K562 (cell line): ENCODE measurements at regions of chr1 and their contacts with region 1.

Region 1: GRCh38 chr1:95233737-95234500 is at the start of gene RWDD3:
- DNase-seq: peak; percentile 93 to 94 (median 94)
- ATAC-seq: peak; percentile 97
- H3K4me3 ChIP-seq: peak within 1 kb of the TSS; percentile 79
- H3K27ac ChIP-seq: peak within 1 kb of the TSS; percentile 70
- H3K4me1 ChIP-seq: peaks cover 11 to 13% of the 10 kb centered on the region in 2 experiments; a peak in 4 of 5 replicates
- H3K27me3 ChIP-seq: no peaks in the 10 kb centered on the region
- CTCF ChIP-seq: peak; percentile 73 to 93 (median 85)
- EP300 ChIP-seq: peak; percentile 29; the same call in 1 of the 2 replicates
- POLR2A ChIP-seq: peak; percentile 82
- RAD21 ChIP-seq: peak; percentile 94 to 98
- polyA plus RNA-seq, gene RWDD3: 52.7 to 65.0 TPM

Region 2: DNA sequence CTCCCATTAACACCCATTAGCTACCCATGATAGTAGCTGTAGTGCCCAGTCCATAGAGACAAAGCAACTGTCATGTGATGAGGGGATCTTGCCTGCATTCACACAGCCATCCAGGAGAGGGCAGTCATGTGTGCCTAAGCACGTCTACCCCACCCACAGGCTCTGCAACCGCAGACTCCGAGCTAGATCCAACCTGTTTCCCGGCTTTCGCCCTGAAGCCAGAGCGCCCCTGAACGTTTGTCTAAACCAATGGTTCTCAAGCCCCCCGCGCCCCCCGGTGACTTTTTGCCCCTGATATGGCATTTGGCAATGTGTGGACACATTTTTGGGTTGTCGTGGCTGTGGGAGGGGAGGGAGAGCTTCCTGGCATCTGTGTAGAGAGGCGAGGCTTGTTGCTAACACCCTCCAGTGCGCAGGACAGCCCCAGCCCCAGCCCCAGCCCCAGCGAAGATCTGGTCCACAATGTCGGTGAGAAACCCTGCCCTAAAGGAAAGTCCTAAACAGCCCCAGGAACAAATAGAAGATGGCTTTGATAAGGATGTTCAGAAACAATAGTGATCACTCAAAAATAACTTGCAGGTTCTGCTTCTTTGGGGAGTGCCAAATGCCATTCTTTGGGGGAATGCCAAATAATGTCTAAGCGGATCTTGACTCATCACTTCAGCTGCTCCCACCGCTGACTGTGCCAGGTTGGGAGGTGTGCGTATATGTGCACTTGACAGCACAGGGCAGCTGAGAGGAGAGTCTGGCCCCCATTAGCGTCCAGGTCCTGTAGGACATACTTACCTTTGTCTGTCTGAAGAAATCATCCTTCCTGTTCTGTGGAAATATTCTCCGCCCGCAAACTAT is 379.2 kb before region 1 on chr1:
- CTCF ChIA-PET with region 1: interaction called, 4 read pairs
- POLR2A ChIA-PET with region 1: interaction called, 4 read pairs
- in situ Hi-C with region 1: no loop called
- intact Hi-C with region 1: loop called (anchors 1 kb)
- DNase-seq: peak; percentile 85 to 87 (median 86)
- ATAC-seq: peak; percentile 99
- H3K4me3 ChIP-seq: peak overlapping the region; percentile 28
- H3K27ac ChIP-seq: no peak overlapping the region
- H3K4me1 ChIP-seq: no peaks in the 10 kb centered on the region; a peak in 1 of 5 replicates
- H3K27me3 ChIP-seq: peaks cover 3 to 5% of the 10 kb centered on the region in 2 experiments; a peak in 4 of 5 replicates
- CTCF ChIP-seq: peak; percentile 91 to 92 (median 91)
- EP300 ChIP-seq: no peak
- POLR2A ChIP-seq: no peak
- RAD21 ChIP-seq: peak; percentile 87 to 94

Region 3: GRCh38 chr1:95013950-95014574 is 219.9 kb before region 1 on chr1:
- CTCF ChIA-PET with region 1: no interaction called
- POLR2A ChIA-PET with region 1: no interaction called
- in situ Hi-C with region 1: no loop called
- intact Hi-C with region 1: no loop called
- DNase-seq: no peak
- ATAC-seq: no peak
- H3K4me3 ChIP-seq: no peak overlapping the region
- H3K27ac ChIP-seq: no peak overlapping the region
- H3K4me1 ChIP-seq: no peaks in the 10 kb centered on the region
- H3K27me3 ChIP-seq: no peaks in the 10 kb centered on the region
- CTCF ChIP-seq: no peak
- EP300 ChIP-seq: no peak
- POLR2A ChIP-seq: no peak
- RAD21 ChIP-seq: no peak

Region 4: GRCh38 chr1:95043141-95043980 is 190.6 kb before region 1 on chr1:
- CTCF ChIA-PET with region 1: interaction called, 6 read pairs
- POLR2A ChIA-PET with region 1: no interaction called
- in situ Hi-C with region 1: no loop called
- intact Hi-C with region 1: loop called (anchors 5 kb)
- DNase-seq: peak; percentile 77 to 88 (median 81)
- ATAC-seq: peak; percentile 95
- H3K4me3 ChIP-seq: no peak overlapping the region
- H3K27ac ChIP-seq: no peak overlapping the region
- H3K4me1 ChIP-seq: no peaks in the 10 kb centered on the region; a peak in 1 of 5 replicates
- H3K27me3 ChIP-seq: no peaks in the 10 kb centered on the region
- CTCF ChIP-seq: peak; percentile 99 to 100 (median 100)
- EP300 ChIP-seq: no peak
- POLR2A ChIP-seq: no peak
- RAD21 ChIP-seq: peak; percentile 82 to 95

Region 5: GRCh38 chr1:95072532-95073419 is 161.1 kb before region 1 on chr1 and contains the start of gene ALG14:
- CTCF ChIA-PET with region 1: interaction called, 3 read pairs
- POLR2A ChIA-PET with region 1: no interaction called
- in situ Hi-C with region 1: no loop called
- intact Hi-C with region 1: loop called (anchors 1 kb)
- DNase-seq: peak; percentile 86 to 97 (median 90)
- ATAC-seq: peak; percentile 99
- H3K4me3 ChIP-seq: peak within 1 kb of the TSS; percentile 54
- H3K27ac ChIP-seq: peak within 1 kb of the TSS; percentile 66
- H3K4me1 ChIP-seq: peaks cover 0 to 5% of the 10 kb centered on the region in 2 experiments; a peak in 2 of 5 replicates
- H3K27me3 ChIP-seq: no peaks in the 10 kb centered on the region
- CTCF ChIP-seq: no peak
- EP300 ChIP-seq: no peak
- POLR2A ChIP-seq: peak; percentile 83
- RAD21 ChIP-seq: peak in 1 of 2 experiments; percentile 17; a peak in 1 of 4 replicates
- polyA plus RNA-seq, gene ALG14: 14.9 to 16.2 TPM

Region 6: DNA sequence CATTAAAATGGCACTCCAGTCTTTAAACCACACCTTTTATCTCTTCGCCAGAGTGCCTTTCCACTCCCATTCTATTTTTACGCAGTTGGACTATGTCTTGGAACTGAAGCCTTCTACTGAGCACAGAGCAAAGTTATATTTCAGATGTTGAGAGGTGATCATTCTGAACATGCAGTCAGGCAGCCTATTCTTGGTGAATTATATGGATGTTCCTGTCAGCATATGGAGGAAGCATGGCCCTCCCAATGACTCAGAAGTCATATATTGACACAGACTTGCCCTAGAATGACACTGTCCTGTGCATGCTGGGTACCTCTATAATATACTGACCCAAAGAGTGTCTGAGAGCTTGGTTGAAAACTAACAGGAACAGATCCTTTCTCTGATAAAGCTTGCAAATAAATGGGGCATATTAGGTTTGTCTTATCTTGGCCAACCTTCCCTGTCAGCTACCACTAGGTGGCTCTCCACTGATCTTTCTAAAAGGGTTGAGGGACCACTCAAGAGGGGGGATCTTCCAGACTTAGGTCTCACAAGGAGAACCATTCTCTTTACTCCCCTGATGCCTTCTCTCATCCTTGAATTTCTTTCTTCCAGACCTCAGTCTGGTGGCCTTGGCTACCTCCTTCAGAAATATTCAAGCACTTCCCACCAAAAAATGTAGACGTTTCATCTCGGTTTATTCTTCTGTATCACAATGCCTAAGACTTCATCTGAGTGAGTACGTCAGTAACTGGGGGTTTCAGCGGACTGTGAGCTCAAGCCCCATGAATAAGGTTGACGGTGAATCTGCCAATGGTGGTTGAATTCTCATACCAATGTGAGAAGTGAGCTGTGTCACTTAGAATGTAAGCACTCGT is 149.4 kb before region 1 on chr1:
- CTCF ChIA-PET with region 1: interaction called, 8 read pairs
- POLR2A ChIA-PET with region 1: no interaction called
- in situ Hi-C with region 1: no loop called
- intact Hi-C with region 1: loop called (anchors 1 kb)
- DNase-seq: peak; percentile 68 to 84 (median 77)
- ATAC-seq: peak; percentile 78
- H3K4me3 ChIP-seq: no peak overlapping the region; the same call in 1 of the 2 replicates
- H3K27ac ChIP-seq: peak overlapping the region; percentile 95
- H3K4me1 ChIP-seq: peaks cover 9 to 43% of the 10 kb centered on the region in 2 experiments; a peak in 4 of 5 replicates
- H3K27me3 ChIP-seq: no peaks in the 10 kb centered on the region
- CTCF ChIP-seq: peak; percentile 64 to 84 (median 76); a peak in 5 of 6 replicates
- EP300 ChIP-seq: peak; percentile 54
- POLR2A ChIP-seq: no peak
- RAD21 ChIP-seq: peak; percentile 58 to 69

Region 7: DNA sequence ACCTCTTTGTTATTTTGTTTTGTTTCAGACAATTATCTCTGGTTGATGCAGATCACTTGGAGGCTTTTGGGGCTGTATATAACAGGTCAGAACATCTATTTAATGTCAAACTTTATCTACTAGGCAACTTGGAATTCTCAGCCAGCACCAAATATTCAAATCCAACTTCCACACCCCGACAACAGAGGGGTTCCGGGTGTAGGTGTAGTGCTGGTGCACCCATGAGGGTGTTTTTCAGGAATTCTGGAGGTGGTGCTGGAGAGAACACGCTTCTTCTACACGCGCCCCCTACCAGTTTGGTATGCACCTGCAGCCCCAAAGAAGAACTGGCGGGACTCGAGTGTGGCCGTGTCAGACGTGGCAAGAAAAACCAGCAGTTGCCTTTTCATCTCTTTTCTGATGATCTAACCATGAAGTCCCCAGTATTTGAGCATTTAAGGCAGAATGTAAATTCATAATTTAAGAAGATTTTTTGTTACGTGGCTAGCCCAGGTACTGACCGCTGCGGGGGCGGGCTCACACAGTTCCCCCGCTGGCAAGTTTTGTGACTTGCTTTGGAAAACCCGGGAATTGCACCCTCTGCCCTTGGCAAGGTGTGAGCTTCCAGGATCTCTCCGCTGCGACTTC is 117.2 kb before region 1 on chr1:
- CTCF ChIA-PET with region 1: no interaction called
- POLR2A ChIA-PET with region 1: interaction called, 3 read pairs
- in situ Hi-C with region 1: no loop called
- intact Hi-C with region 1: loop called (anchors 2 kb)
- DNase-seq: peak; percentile 64 to 89 (median 74)
- ATAC-seq: peak; percentile 76
- H3K4me3 ChIP-seq: peak overlapping the region; percentile 83
- H3K27ac ChIP-seq: peak overlapping the region; percentile 81
- H3K4me1 ChIP-seq: peaks cover 17 to 42% of the 10 kb centered on the region in 2 experiments; a peak in 4 of 5 replicates
- H3K27me3 ChIP-seq: no peaks in the 10 kb centered on the region
- CTCF ChIP-seq: peak; percentile 87 to 92 (median 90)
- EP300 ChIP-seq: no peak
- POLR2A ChIP-seq: no peak
- RAD21 ChIP-seq: peak; percentile 24 to 61; a peak in 3 of 4 replicates

Region 8: GRCh38 chr1:95179205-95179986 is 54.5 kb before region 1 on chr1:
- CTCF ChIA-PET with region 1: no interaction called
- POLR2A ChIA-PET with region 1: interaction called, 3 read pairs
- in situ Hi-C with region 1: no loop called
- intact Hi-C with region 1: loop called (anchors 5 kb)
- DNase-seq: peak; percentile 74 to 92 (median 86)
- ATAC-seq: peak; percentile 98
- H3K4me3 ChIP-seq: no peak overlapping the region
- H3K27ac ChIP-seq: peak overlapping the region; percentile 64
- H3K4me1 ChIP-seq: peaks cover 14 to 20% of the 10 kb centered on the region in 2 experiments; a peak in 4 of 5 replicates
- H3K27me3 ChIP-seq: no peaks in the 10 kb centered on the region
- CTCF ChIP-seq: 0 out of 6 replicates have a peak, but pooled peaks of 1 of the 3 experiments have one; percentile 2
- EP300 ChIP-seq: peak; percentile 82
- POLR2A ChIP-seq: no peak
- RAD21 ChIP-seq: 0 out of 4 replicates have a peak, but pooled peaks of 1 of the 2 experiments have one; percentile 11